PC-9 (cell line): ENCODE measurements at regions of chr1 and their contacts with region 1.

Region 1: DNA sequence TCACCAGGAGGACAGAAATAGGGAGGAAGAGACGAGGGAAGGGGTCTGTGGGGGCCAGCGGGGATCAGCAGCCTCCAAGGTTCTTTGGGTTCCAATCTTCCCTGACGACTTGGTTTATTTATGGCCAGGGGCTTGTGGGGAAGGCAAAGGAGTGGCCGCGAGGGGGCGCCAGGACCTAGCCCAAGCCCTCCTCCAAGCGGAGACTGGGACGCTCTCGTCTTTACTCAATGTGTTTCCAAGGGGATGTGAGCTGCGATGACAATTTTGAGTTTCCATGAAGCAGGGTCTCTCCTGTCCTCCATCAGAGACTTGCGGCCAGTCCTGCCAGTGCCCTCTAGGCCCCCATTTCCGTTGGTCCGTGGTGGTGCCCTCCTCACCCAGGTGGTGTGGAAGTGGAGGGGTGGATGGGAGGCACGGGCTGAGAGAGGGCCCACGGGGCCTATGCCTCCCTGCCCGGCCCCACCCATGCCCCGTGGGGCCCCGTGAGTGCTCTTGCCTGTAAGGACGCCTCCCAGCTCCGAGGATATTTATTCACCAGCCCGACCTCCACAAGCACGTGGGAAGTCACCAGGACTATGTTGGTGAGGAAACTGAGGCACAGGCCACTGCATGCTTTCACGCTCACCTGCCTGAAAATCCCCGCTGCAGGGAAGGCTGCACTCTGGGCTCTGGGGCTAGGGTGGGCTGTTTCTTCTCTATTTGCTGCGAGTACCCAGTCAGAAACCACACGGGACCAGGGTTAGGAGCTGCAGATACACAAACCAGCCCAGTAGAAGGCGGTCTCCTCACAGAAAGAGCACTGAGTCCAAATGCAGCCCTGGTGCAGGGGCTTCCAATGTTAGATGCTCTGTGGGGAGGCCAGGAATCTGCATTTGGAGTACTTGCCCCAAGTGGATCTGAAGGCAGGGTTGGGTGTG is 26.5 kb downstream of the DMRTB1 start:
- DNase-seq: peak; percentile 52 to 81
- H3K4me3 ChIP-seq: no peak overlapping the region
- H3K27ac ChIP-seq: no peak overlapping the region
- H3K4me1 ChIP-seq: no peaks in the 10 kb centered on the region
- H3K27me3 ChIP-seq: peaks cover 58% of the 10 kb centered on the region
- CTCF ChIP-seq: peak; percentile 91

Region 2: DNA sequence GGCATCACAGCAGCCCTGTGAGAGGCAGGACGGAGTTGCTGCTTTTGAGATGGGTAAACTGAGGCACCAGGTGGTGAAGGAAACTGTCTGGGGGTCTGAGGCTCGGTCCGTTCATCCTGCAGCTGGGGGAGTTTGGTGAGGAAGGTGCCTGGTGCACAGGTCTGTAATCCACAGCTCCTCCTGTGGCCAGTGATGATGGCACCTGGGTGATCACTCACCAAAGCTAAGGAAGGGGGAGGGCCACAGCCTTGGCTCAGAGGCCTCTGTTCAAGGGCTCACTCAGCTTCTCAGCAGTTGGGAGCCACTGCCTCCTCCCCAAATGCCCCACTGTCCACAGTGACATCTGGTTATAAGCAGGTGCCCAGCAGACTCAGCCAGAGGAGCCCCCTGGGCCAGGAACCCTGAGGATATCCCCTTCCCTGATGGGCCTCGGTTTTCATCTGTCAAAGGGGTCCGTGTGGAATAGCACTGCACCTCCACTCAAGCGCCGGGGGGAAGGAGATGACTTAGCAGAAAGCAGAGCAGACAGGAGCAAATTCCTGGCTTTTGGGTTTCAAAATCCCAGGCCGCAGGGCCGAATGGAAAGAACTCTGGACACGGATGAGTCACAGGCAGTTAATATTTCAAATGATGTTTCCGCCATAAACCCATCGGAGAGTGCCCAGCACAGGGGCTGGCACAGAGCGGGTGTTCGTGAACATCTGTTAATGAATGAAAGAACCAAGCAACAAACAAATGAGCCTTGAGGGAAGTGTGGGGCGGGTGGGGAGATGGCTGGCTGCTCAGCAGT is 56.2 kb after region 1 on chr1:
- CTCF ChIA-PET with region 1: interaction called, 3 read pairs
- POLR2A ChIA-PET with region 1: interaction called, 11 read pairs
- intact Hi-C with region 1: no loop called
- DNase-seq: peak; percentile 68 to 89
- H3K4me3 ChIP-seq: peak overlapping the region; percentile 33; the same call in 1 of the 2 replicates
- H3K27ac ChIP-seq: peak overlapping the region; percentile 97
- H3K4me1 ChIP-seq: peaks cover 39% of the 10 kb centered on the region
- H3K27me3 ChIP-seq: no peaks in the 10 kb centered on the region
- CTCF ChIP-seq: peak; percentile 78

Region 3: DNA sequence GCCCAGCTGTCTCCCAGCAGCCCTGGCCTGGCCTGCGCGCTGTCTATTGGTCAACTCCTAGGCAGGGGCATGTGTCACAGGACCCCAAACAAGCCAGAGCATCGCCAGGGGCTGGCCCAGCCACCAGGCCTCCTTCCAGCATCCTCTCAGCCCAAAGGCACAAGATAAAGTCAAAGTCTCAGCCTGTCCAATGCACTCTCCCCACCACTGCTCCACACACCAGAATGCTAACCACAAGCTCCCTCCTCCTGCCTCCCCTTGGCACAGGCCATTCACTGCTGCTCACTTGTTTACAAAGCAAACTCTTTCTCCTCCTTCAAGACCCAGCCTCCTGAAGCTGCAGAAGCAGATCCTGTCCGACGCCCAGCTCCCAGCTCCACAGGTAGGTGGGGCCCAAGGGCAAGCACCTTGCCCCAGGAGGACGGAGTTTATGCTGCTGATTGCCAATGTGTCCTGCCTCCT is 106.8 kb after region 1 on chr1:
- CTCF ChIA-PET with region 1: no interaction called
- POLR2A ChIA-PET with region 1: no interaction called
- intact Hi-C with region 1: loop called (anchors 2 kb)
- DNase-seq: peak; percentile 71 to 74
- H3K4me3 ChIP-seq: no peak overlapping the region
- H3K27ac ChIP-seq: no peak overlapping the region
- H3K4me1 ChIP-seq: no peaks in the 10 kb centered on the region; the same call in 1 of the 2 replicates
- H3K27me3 ChIP-seq: peaks cover 2% of the 10 kb centered on the region
- CTCF ChIP-seq: peak; percentile 54; the same call in 1 of the 2 replicates

Region 4: DNA sequence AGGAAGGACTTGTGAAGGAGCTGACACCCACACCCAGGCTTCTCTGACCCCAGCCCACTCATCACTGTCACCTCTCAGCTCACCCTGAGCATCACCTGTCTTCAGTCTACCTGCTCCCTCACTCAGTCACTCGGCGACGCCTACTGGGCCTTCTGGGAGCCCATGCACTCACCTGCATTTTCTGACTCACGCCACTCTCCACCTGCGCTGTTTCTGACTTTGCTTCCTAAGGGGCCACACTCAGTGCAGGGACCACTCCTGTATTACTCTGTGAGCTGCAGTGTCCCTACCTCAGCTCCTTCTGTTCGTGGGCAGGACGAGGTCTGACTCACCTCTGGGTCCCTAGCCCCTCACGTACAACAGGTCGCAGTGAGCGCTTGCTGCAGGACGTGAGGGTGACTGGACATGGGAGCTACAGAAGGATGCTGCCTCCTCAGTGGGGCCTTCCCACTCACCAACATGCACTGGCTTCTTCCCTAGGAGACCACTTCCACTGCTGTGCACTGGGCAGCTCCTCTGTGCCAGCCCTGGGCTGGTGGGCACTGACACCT is 151.0 kb after region 1 on chr1:
- CTCF ChIA-PET with region 1: no interaction called
- POLR2A ChIA-PET with region 1: no interaction called
- intact Hi-C with region 1: loop called (anchors 1 kb)
- DNase-seq: no peak
- H3K4me3 ChIP-seq: no peak overlapping the region
- H3K27ac ChIP-seq: no peak overlapping the region
- H3K4me1 ChIP-seq: no peaks in the 10 kb centered on the region
- H3K27me3 ChIP-seq: peaks cover 20% of the 10 kb centered on the region; the same call in 1 of the 2 replicates
- CTCF ChIP-seq: no peak

Region 5: GRCh38 chr1:53681977-53682685 is 196.4 kb after region 1 on chr1:
- CTCF ChIA-PET with region 1: interaction called, 6 read pairs
- POLR2A ChIA-PET with region 1: no interaction called
- intact Hi-C with region 1: loop called (anchors 1 kb)
- DNase-seq: peak; percentile 38 to 51
- H3K4me3 ChIP-seq: no peak overlapping the region
- H3K27ac ChIP-seq: no peak overlapping the region
- H3K4me1 ChIP-seq: peaks cover 18% of the 10 kb centered on the region
- H3K27me3 ChIP-seq: peaks cover 46% of the 10 kb centered on the region
- CTCF ChIP-seq: peak; percentile 77

Region 6: DNA sequence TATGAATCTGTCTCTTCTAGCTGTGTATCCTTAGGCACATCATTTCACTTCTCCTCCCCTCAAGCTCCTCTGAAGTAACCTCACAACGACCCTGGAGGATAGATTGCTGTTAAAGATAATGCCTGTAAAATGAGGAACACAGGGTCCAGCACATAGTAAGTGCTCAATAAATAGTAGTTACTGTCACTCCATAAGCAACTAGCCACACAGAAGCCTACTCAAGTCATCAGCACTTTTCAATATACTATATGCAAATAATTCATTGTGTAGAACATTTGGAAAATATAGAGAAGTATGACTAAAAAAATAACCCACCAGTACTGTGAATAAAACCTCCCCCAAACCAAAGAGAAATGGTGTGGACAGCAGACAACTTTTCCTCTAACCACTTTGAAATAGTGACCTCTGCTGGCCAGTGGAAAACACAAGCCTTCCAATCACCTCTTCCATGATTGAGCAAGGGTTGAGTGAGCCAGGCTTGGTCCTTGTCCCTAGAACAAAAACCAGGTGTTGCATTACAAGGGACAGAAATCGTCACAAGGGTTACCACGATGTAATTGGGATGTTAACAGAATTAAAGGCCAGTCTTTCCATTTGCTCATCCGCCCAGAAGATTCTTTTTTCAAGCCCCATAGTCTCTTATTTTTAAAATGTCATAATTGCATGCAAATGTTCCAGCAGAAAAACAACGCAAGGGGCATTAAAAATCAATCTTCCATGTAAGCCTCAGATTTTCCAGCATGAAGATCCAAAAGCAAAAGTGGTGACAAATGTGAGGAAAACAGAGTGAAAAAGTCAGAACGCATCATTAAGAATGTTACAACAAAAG is 269.0 kb after region 1 on chr1:
- CTCF ChIA-PET with region 1: interaction called, 5 read pairs
- POLR2A ChIA-PET with region 1: no interaction called
- intact Hi-C with region 1: loop called (anchors 1 kb)
- DNase-seq: peak in 1 of 2 experiments; percentile 16
- H3K4me3 ChIP-seq: no peak overlapping the region
- H3K27ac ChIP-seq: no peak overlapping the region
- H3K4me1 ChIP-seq: no peaks in the 10 kb centered on the region
- H3K27me3 ChIP-seq: no peaks in the 10 kb centered on the region
- CTCF ChIP-seq: peak; percentile 77